Activated CD4-positive, alpha-beta T cell treated with anti-CD3 and anti-CD28 coated beads for 36 hours (primary cell): ENCODE measurements at regions of chr4 and their contacts with region 1.

Region 1: GRCh38 chr4:169810325-169811323 is 52.9 kb upstream of the HPF1 start:
- DNase-seq: peak; percentile 6
- ATAC-seq: no peak
- H3K4me3 Mint-ChIP-seq: no peak overlapping the region
- H3K27ac Mint-ChIP-seq: no peak overlapping the region
- H3K4me1 Mint-ChIP-seq: no peaks in the 10 kb centered on the region
- H3K27me3 Mint-ChIP-seq: peaks cover 3% of the 10 kb centered on the region

Region 2: GRCh38 chr4:169675825-169676224 is 134.8 kb before region 1 on chr4:
- CTCF ChIA-PET with region 1: no interaction called
- POLR2A ChIA-PET with region 1: no interaction called
- intact Hi-C with region 1: no loop called
- DNase-seq: no peak
- ATAC-seq: peak; percentile 23
- H3K4me3 Mint-ChIP-seq: no peak overlapping the region
- H3K27ac Mint-ChIP-seq: no peak overlapping the region
- H3K4me1 Mint-ChIP-seq: peaks cover 5% of the 10 kb centered on the region
- H3K27me3 Mint-ChIP-seq: no peaks in the 10 kb centered on the region

Region 3: DNA sequence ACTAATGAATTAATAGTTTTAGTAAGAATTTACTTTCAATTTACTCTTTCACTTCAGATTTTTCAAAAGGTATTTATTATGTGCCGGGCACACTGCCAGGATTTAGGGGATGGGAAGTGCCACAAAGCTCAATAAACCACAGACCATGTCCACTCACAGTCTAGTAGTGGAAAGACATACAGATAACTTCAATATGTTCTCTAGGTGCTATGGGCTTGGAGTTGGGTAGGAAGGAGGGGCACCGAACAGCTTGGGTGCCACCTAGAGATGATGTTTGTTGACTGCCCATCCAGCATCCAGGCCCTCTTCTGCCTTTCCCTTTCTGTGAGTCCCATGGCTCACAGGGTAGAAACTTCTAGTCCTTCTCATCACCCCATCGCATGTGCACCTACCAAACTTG is 197.7 kb after region 1 on chr4:
- CTCF ChIA-PET with region 1: interaction called, 3 read pairs
- POLR2A ChIA-PET with region 1: no interaction called
- intact Hi-C with region 1: loop called in 1 of 2 experiments (anchors 1 kb)
- DNase-seq: no peak
- ATAC-seq: no peak
- H3K4me3 Mint-ChIP-seq: no peak overlapping the region
- H3K27ac Mint-ChIP-seq: no peak overlapping the region
- H3K4me1 Mint-ChIP-seq: no peaks in the 10 kb centered on the region
- H3K27me3 Mint-ChIP-seq: peaks cover 9% of the 10 kb centered on the region

Region 4: GRCh38 chr4:170047771-170048354 is 237.2 kb after region 1 on chr4:
- CTCF ChIA-PET with region 1: interaction called, 46 read pairs
- POLR2A ChIA-PET with region 1: no interaction called
- intact Hi-C with region 1: loop called (anchors 1 kb)
- DNase-seq: peak; percentile 75
- ATAC-seq: no peak
- H3K4me3 Mint-ChIP-seq: no peak overlapping the region
- H3K27ac Mint-ChIP-seq: no peak overlapping the region
- H3K4me1 Mint-ChIP-seq: no peaks in the 10 kb centered on the region
- H3K27me3 Mint-ChIP-seq: no peaks in the 10 kb centered on the region

Region 5: GRCh38 chr4:170089668-170090351 is 279.2 kb after region 1 on chr4 and contains the start of gene AADAT:
- CTCF ChIA-PET with region 1: interaction called, 3 read pairs
- POLR2A ChIA-PET with region 1: no interaction called
- intact Hi-C with region 1: loop called in 1 of 2 experiments (anchors 1 kb)
- DNase-seq: peak; percentile 60
- ATAC-seq: peak; percentile 85
- H3K4me3 Mint-ChIP-seq: peak within 1 kb of the TSS; percentile 58
- H3K27ac Mint-ChIP-seq: no peak within 1 kb of the TSS
- H3K4me1 Mint-ChIP-seq: peaks cover 9% of the 10 kb centered on the region
- H3K27me3 Mint-ChIP-seq: peaks cover 35% of the 10 kb centered on the region
- total RNA-seq, gene AADAT: not detected